Activated CD4-positive, alpha-beta memory T cell treated with anti-CD3 and anti-CD28 coated beads for 36 hours (primary cell): ENCODE measurements at regions of chr15 and their contacts with region 1.

Region 1: GRCh38 chr15:29269485-29270168 is at the start of gene NSMCE3:
- DNase-seq: peak; percentile 94
- H3K4me3 Mint-ChIP-seq: peak within 1 kb of the TSS; percentile 99
- H3K27ac Mint-ChIP-seq: peak within 1 kb of the TSS; percentile 96
- H3K4me1 Mint-ChIP-seq: peaks cover 42% of the 10 kb centered on the region
- H3K27me3 Mint-ChIP-seq: no peaks in the 10 kb centered on the region
- total RNA-seq, gene NSMCE3: 7.7 TPM

Region 2: GRCh38 chr15:29045717-29046116 is 223.9 kb before region 1 on chr15:
- CTCF ChIA-PET with region 1: no interaction called
- POLR2A ChIA-PET with region 1: no interaction called
- intact Hi-C with region 1: loop called (anchors 1 kb)
- DNase-seq: peak; percentile 38
- H3K4me3 Mint-ChIP-seq: no peak overlapping the region
- H3K27ac Mint-ChIP-seq: no peak overlapping the region
- H3K4me1 Mint-ChIP-seq: peaks cover 14% of the 10 kb centered on the region
- H3K27me3 Mint-ChIP-seq: no peaks in the 10 kb centered on the region

Region 3: GRCh38 chr15:29103824-29104565 is 165.6 kb before region 1 on chr15:
- CTCF ChIA-PET with region 1: interaction called, 10 read pairs
- POLR2A ChIA-PET with region 1: no interaction called
- intact Hi-C with region 1: no loop called
- DNase-seq: peak; percentile 70
- H3K4me3 Mint-ChIP-seq: no peak overlapping the region
- H3K27ac Mint-ChIP-seq: no peak overlapping the region
- H3K4me1 Mint-ChIP-seq: no peaks in the 10 kb centered on the region
- H3K27me3 Mint-ChIP-seq: no peaks in the 10 kb centered on the region

Region 4: DNA sequence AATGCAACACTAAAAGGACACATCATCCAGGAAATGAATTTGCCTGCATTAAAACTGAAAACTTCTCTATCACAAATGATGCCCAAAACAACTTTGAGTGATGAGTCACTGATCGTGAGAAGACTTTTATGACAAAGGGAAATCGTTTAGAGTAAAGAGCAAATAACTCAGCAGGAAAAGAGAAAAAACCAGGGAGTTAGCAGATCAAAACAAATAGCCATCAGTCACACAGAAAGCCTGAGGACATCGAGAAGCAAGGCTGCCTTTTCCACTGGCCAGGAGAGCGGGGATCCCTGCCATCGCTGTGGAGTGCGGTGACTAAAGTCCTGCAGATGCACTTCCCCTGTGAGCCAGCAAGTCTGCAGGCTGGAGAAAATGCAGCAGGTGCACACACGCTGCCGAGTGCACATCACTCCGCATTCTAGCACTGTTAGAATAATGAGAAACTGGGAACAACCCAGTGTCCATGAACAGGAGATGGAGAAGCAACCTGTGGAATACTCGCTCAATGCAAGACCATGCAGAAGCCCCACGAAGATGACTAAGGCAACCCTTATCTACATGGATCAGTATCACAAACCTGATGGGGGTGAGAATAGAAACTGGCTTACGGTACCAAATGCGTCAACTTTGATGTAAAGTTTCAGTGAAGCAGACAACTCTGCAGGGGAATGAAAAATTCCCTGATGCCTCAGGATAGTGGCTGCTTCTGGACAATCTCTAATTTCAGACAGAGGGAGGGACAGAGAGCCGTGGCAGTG is 86.4 kb before region 1 on chr15:
- CTCF ChIA-PET with region 1: no interaction called
- POLR2A ChIA-PET with region 1: no interaction called
- intact Hi-C with region 1: loop called (anchors 1 kb)
- DNase-seq: peak; percentile 16
- H3K4me3 Mint-ChIP-seq: no peak overlapping the region
- H3K27ac Mint-ChIP-seq: no peak overlapping the region
- H3K4me1 Mint-ChIP-seq: peaks cover 10% of the 10 kb centered on the region
- H3K27me3 Mint-ChIP-seq: peaks cover 19% of the 10 kb centered on the region

Region 5: DNA sequence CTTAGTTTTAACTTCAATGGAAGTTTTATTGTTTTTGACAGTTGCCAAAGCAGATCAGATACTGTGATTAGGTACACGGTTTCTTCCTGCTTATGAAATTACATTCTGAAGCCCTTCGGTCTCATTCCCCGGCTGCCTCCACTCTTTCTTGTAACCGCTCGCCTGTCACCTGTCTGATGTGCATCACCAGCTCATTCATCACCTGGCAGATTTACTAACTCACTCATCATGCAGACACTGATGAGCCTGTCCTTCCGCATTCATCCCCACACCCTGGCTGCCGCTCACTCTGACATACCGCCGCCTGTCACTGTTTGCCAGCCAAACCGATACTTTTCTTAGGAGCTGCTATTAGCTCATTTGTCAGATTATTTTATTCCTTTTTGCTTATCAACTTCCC is 82.8 kb after region 1 on chr15:
- CTCF ChIA-PET with region 1: no interaction called
- POLR2A ChIA-PET with region 1: no interaction called
- intact Hi-C with region 1: no loop called
- DNase-seq: no peak
- H3K4me3 Mint-ChIP-seq: no peak overlapping the region
- H3K27ac Mint-ChIP-seq: no peak overlapping the region
- H3K4me1 Mint-ChIP-seq: no peaks in the 10 kb centered on the region
- H3K27me3 Mint-ChIP-seq: peaks cover 6% of the 10 kb centered on the region